Gastrocnemius medialis (tissue), 4 donors: ENCODE measurements at regions of chr11 and their contacts with region 1.

Region 1: DNA sequence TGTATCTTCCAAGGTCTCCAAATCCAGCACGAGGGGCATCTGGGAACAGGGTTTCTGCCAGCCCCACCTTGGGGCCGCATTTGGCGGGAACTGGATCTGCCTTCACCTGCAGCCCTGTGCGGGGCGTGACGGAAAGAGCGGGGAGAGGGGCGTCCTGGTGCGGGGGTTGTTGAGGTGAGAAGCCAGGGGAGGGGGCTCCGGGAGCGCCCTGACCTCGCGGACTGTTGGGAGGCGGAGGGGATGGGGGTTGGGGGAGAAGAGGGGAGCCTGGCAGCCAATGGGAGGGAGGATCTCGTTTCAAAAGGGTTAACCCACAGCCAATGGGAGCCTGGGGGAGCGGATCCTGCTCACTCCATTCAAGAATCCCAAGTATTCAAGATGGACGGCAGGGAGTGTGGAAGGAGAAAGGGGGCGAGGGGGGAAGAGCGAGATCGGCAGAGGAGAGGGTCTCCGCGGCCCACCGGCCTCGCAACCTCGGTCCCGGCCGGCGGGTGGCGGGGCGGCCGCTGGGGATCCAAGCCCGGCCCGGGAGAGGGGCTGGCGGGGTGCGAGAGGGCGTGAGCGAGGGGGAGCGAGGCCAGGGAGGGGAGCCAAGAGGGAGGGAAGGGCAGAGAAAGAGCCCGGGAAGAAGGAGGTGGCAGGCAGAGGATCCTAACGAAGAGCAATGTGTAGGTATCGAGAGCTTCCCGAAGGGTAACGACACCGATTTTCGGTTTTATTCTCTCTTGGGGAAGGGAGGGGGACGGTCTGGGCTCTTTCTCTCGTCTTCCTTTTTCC is 11.5 kb downstream of the YPEL4 start:
- DNase-seq: no peak
- ATAC-seq: peak; percentile 47 to 57
- H3K4me3 ChIP-seq: peak overlapping the region; percentile 55 to 76 (median 63)
- H3K27ac ChIP-seq: peak overlapping the region; percentile 21 to 65 (median 42)
- H3K4me1 ChIP-seq: peaks cover 0 to 20% of the 10 kb centered on the region in 2 donors
- H3K27me3 ChIP-seq: peaks cover 14 to 19% (median 18%) of the 10 kb centered on the region in 3 donors
- CTCF ChIP-seq: no peak
- POLR2A ChIP-seq: no peak

Region 2: GRCh38 chr11:57597916-57598830 is 40.0 kb before region 1 on chr11:
- in situ Hi-C with region 1: no loop called
- intact Hi-C with region 1: loop called (anchors 2 kb)
- DNase-seq: peak; percentile 50 to 67
- ATAC-seq: peak; percentile 82 to 85
- H3K4me3 ChIP-seq: peak overlapping the region; percentile 51 to 64 (median 60)
- H3K27ac ChIP-seq: peak overlapping the region; percentile 76 to 90 (median 84)
- H3K4me1 ChIP-seq: peaks cover 0 to 7% of the 10 kb centered on the region in 2 donors
- H3K27me3 ChIP-seq: peaks cover 4 to 16% (median 6%) of the 10 kb centered on the region in 3 donors
- CTCF ChIP-seq: no peak
- POLR2A ChIP-seq: no peak

Region 3: GRCh38 chr11:57680552-57680874 is 42.3 kb after region 1 on chr11:
- in situ Hi-C with region 1: no loop called
- intact Hi-C with region 1: no loop called
- DNase-seq: no peak
- ATAC-seq: no peak
- H3K4me3 ChIP-seq: no peak overlapping the region
- H3K27ac ChIP-seq: no peak overlapping the region
- H3K4me1 ChIP-seq: no peaks in the 10 kb centered on the region
- H3K27me3 ChIP-seq: no peaks in the 10 kb centered on the region
- CTCF ChIP-seq: no peak
- POLR2A ChIP-seq: no peak

Region 4: GRCh38 chr11:57711414-57712255 is 73.4 kb after region 1 on chr11 and contains the start of gene MED19:
- in situ Hi-C with region 1: no loop called
- intact Hi-C with region 1: no loop called
- DNase-seq: peak; percentile 45 to 69
- ATAC-seq: peak; percentile 40 to 43
- H3K4me3 ChIP-seq: peak within 1 kb of the TSS; percentile 82 to 99 (median 92)
- H3K27ac ChIP-seq: peak within 1 kb of the TSS; percentile 87 to 91 (median 89)
- H3K4me1 ChIP-seq: peaks cover 33 to 34% of the 10 kb centered on the region in 2 donors
- H3K27me3 ChIP-seq: no peaks in the 10 kb centered on the region
- CTCF ChIP-seq: peak in 1 of 5 experiments; percentile 9
- POLR2A ChIP-seq: peak; percentile 39 to 50
- total RNA-seq, gene MED19: 8.3 to 13.1 (median 10.4) TPM